Dendritic cell treated with granulocyte-macrophage colony-stimulating factor and Interleukin-4, amounts not matched to agents 40 ng/mL and 50 ng/mL, for 4 days (primary cell): ENCODE measurements at regions of chr1 and their contacts with region 1.

Region 1: DNA sequence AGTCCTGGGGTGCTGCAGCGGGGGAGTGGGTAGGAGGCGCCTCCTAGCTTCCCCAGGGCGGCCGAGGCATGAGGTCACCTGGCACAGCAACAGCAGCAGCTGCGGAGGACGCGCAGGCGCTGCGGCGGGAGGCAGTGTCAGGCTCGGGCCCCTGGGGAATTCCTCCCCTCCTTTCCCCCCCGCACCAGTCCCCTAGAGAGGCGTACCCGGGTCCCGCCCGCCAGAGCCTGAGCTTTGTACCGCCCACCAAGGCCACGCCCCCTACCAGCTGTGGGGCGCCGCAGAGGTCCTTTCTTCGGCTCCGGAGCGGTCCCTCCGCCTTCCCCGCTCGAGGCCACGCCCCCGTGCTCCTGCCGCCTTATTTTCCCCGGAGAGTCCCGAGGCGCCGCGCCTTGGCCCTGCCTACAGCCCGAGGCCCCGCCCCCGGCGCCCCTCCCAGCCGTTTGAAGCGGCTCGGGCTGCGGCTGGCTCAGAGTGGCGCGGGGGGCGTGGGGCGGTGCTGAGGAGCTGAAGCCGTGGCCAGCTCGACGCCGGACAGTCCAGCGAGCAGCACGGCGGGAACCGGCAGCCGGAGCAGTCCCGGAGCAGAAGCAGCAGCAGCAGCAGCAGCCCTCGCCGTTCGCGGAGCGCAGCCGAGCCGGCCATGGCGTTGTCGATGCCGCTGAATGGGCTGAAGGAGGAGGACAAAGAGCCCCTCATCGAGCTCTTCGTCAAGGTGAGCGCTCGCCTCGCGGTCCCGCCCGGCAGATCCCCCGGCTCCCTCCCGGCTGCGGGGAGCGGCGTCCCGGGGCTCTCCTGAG is at the start of gene CLIC4:
- H3K4me3 Mint-ChIP-seq: peak within 1 kb of the TSS; percentile 85
- H3K27ac Mint-ChIP-seq: peak within 1 kb of the TSS; percentile 91
- H3K4me1 Mint-ChIP-seq: peaks cover 66% of the 10 kb centered on the region
- H3K27me3 Mint-ChIP-seq: no peaks in the 10 kb centered on the region

Region 2: GRCh38 chr1:24642481-24643361 is 102.4 kb before region 1 on chr1 and contains the start of gene SRRM1:
- intact Hi-C with region 1: loop called (anchors 5 kb)
- H3K4me3 Mint-ChIP-seq: peak within 1 kb of the TSS; percentile 82
- H3K27ac Mint-ChIP-seq: peak within 1 kb of the TSS; percentile 90
- H3K4me1 Mint-ChIP-seq: peaks cover 47% of the 10 kb centered on the region
- H3K27me3 Mint-ChIP-seq: no peaks in the 10 kb centered on the region

Region 3: DNA sequence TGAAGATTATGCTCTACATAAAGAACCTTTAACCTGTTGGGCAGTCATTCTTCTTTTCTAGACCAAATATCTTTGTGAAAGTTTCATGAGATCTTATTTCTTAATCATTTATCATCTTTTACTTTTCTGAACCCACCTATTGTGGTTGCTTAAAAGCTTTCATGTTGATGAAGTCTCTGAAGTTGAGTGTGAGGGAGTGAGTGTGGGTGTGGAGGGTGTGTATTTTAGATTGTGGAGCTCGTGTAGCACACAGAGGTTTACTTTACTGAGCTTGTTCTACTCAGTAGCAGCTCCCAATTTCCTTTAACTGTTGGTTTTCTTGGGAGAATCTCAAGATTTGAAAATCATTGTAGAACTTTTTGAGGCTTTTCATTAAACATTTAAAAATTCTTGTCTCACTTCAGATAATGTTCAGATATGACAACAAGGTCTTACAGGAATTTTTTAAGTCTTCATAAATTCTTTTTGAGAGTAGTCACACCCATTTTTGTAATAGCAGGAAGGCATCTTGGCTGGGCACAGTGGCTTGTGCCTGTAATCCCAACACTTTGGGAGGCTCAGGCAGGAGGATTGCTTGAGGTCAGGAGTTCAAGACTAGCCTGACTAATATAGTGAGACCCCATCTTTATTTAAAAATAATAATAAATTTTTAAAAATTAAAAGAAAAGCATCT is 85.0 kb before region 1 on chr1:
- intact Hi-C with region 1: no loop called
- H3K4me3 Mint-ChIP-seq: no peak overlapping the region
- H3K27ac Mint-ChIP-seq: no peak overlapping the region
- H3K4me1 Mint-ChIP-seq: no peaks in the 10 kb centered on the region
- H3K27me3 Mint-ChIP-seq: no peaks in the 10 kb centered on the region

Region 4: DNA sequence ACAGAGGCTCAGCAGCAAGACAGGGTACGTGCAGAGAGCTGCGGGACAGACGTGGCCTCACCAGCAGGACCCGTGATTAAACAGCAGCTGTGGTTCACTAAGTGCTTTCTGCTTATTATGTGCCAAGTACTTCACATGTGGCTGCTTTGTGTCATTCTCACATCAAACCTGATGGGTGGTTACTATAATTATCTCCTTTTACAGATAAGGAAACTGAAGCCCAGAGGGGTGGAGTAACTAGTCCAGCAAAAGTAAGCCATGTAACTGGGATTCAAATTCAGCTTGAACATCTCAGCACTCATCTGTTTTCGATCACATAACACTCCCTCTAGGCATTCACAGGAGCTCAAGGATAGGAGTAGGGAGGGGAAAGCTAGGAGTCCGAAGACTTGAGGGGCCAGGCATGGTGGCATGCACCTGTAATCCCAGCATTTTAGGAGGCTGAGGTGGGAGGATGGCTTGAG is 50.7 kb before region 1 on chr1:
- intact Hi-C with region 1: loop called (anchors 5 kb)
- H3K4me3 Mint-ChIP-seq: no peak overlapping the region
- H3K27ac Mint-ChIP-seq: peak overlapping the region; percentile 70
- H3K4me1 Mint-ChIP-seq: peaks cover 45% of the 10 kb centered on the region
- H3K27me3 Mint-ChIP-seq: no peaks in the 10 kb centered on the region

Region 5: GRCh38 chr1:24707687-24708086 is 37.4 kb before region 1 on chr1:
- intact Hi-C with region 1: loop called (anchors 2 kb)
- H3K4me3 Mint-ChIP-seq: no peak overlapping the region
- H3K27ac Mint-ChIP-seq: peak overlapping the region; percentile 92
- H3K4me1 Mint-ChIP-seq: peaks cover 49% of the 10 kb centered on the region
- H3K27me3 Mint-ChIP-seq: no peaks in the 10 kb centered on the region

Region 6: DNA sequence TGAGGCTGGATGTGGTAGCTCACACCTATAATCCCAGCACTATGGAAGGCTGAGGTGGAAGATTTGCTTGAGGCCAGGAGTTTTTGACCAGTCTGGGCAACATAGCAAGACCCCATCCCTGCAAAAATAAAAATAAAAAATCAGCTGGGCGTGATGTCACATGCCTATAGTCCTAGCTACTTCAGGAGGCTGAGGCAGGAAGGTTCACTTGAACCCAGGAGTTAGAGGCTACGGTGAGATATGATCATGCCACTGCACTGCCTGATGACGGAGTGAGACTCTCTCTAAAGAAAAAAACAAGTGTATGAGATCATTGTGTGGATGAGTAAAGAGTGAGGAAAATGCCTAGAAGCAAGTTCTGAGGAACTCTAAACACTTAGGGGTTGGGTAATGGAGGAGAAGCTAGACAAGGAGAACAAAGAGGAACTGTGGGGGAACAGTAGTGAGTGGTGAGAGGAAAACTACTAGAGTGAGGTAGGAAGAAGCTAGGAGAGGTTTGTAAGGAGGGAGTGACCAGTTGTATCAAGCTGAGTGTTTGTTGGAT is 17.1 kb after region 1 on chr1:
- intact Hi-C with region 1: loop called (anchors 2 kb)
- H3K4me3 Mint-ChIP-seq: no peak overlapping the region
- H3K27ac Mint-ChIP-seq: no peak overlapping the region
- H3K4me1 Mint-ChIP-seq: peaks cover 21% of the 10 kb centered on the region
- H3K27me3 Mint-ChIP-seq: no peaks in the 10 kb centered on the region

Region 7: DNA sequence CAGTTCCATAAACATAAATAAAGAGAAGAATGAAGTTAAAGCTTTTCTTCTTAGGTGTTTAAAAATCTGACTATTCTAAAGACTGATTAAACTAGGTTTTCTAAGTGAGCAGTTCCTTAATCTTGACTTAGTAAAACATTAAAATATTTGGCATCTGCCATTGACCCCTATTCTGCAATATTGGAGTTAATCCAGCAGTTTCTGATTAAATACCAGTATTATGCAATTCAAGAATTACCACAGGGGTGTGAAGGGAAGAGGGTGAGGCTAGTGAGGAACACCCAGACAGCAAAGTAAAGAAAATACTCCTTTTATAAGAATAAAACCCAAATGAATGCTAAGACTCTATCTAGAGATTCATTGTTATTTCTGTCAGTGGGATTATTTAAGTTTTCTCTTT is 41.1 kb after region 1 on chr1:
- intact Hi-C with region 1: no loop called
- H3K4me3 Mint-ChIP-seq: no peak overlapping the region
- H3K27ac Mint-ChIP-seq: peak overlapping the region; percentile 65
- H3K4me1 Mint-ChIP-seq: peaks cover 25% of the 10 kb centered on the region
- H3K27me3 Mint-ChIP-seq: no peaks in the 10 kb centered on the region

Region 8: DNA sequence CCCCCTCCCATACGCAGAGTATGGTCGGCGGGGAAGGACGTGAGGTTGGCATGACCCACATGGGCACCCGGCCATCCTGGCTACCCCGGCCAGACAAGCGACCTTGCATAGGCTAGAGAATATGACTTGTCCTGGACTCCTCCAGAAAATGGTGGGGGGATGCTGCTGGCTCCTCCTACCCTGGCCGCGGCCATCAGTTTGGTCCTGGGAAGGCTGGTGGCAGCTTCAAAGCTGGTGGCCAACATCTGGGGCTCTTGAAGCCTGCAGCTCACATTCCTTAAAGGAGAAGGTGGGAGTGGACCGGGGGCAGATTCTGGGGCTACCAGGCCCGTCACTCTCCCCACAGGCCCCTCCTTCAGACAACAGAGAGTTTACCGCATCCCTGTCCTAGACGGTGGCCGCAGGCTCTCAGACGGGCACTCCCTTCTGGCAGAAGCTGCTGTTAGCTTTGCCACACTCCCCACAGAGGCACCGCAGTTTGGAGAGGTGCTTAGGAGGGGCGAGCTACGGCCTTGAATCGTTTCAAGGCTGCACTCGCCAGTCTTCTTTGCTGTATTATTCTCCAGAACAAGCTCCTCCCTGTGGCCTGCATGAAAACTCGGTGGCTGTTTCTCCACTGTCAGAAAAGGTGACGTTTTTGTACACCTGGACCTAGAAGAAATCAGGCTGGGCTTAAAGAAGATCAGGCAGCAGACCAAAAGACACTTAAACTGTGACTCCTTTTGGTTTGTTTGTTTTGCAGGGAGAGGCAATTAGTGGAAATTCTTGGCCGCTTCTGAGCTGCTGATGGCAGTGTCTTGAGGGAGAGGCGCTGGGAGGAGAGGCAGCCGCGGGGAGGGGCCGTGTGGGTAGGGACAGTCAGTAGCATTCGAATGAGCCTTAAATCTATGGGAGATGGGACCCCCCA is 117.0 kb after region 1 on chr1:
- intact Hi-C with region 1: no loop called
- H3K4me3 Mint-ChIP-seq: no peak overlapping the region
- H3K27ac Mint-ChIP-seq: no peak overlapping the region
- H3K4me1 Mint-ChIP-seq: peaks cover 23% of the 10 kb centered on the region
- H3K27me3 Mint-ChIP-seq: peaks cover 52% of the 10 kb centered on the region